Cardiac septum (tissue), 1 donor: ENCODE measurements at regions of chr3 and their contacts with region 1.

Region 1: DNA sequence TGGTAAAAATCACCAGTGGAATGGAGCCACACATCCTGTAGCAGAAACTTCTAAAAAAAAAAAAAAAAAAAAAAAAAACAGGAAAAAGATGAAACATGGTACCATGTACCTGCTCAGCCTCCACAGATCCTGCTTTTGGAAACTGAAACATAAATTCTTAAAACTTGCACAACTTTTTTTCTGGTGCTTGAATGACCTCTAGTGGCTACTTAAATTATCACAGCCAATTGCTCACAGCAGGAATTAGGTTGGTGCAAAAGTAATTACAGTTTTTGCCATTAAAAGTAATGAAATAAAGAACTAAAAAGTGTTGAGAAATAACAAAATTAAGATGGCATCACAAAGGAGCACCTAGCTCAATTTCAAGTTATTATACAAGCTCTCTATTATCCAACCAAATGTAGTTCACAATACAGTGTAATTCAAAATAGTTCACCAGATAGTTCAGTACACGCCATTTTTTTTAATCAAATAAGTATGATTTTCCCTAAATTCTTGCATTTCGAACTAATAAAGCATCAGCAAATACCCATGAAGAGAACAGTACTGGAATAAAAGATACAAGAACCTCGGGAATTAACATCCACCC is 80.6 kb downstream of the ULK4 start:
- DNase-seq: no peak

Region 2: GRCh38 chr3:40329071-40329470 is 1552.3 kb before region 1 on chr3:
- intact Hi-C with region 1: loop called (anchors 5 kb)
- DNase-seq: no peak

Region 3: DNA sequence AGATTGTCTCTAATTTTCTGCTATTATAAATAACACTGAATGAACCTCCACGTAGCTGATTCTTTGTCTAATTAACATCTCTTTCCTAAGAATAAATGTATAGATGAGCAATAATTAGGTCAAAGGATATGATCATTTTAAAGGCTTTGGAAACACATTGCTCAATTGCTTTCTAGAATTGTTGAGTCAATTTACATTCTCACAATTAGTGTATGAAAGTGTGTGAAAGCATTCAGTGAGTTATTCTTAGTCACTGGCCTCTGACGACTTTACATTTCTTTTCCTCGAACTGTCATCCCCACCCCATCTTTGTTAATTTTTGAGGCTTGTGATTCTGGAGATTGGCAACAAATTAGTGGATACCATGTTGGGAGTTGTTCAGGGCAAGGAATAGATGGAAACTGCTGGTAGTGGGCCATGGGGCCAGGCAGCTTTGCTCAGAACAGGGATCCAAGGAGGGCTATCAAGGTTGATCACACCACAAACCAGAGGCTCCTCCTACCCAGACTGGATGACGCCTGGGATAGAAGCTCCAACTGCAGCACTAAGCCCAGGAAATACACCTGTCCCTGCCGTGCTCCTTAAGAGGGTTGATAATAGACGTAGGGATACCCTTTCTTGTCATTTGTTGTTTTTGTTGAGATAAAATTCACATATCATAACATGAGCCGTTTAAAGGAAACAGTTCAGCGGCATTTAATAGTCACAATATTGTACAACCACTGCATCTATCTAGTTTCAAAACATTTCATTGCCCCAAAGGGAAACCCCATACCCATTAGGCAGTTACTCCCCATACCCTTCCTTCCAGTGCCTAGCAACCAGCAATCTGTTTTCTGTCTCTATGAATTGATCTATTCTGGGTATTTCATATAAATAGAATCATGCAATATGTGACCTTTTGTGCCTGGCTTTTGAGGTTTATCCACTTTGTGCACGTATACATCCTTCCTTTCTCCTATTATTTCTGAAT is 1543.9 kb before region 1 on chr3:
- intact Hi-C with region 1: loop called (anchors 5 kb)
- DNase-seq: no peak